ENCODE measurements at regions of chrX and their contacts with region 1.

Region 1: GRCh38 chrX:154013614-154014360 is 5.9 kb downstream of the IRAK1 start:
- DNase-seq: peak in 2 of 3 donors; percentile 51 to 57
- H3K4me3 ChIP-seq: no peak overlapping the region
- H3K4me3 Mint-ChIP-seq: no peak overlapping the region
- H3K27ac ChIP-seq: peak overlapping the region in 1 of 2 donors; percentile 40
- H3K27ac Mint-ChIP-seq: peak overlapping the region; percentile 18 to 85 (median 72)
- H3K4me1 ChIP-seq: peaks cover 45 to 58% of the 10 kb centered on the region in 2 donors
- H3K4me1 Mint-ChIP-seq: peaks cover 30% of the 10 kb centered on the region
- H3K27me3 ChIP-seq: no peaks in the 10 kb centered on the region
- H3K27me3 Mint-ChIP-seq: peaks cover 0 to 50% (median 0%) of the 10 kb centered on the region in 3 donors
- CTCF ChIP-seq: peak; percentile 90

Region 2: GRCh38 chrX:153927922-153928760 is 85.6 kb before region 1 on chrX:
- intact Hi-C with region 1: no loop called
- DNase-seq: peak; percentile 91 to 98 (median 95)
- H3K4me3 ChIP-seq: peak overlapping the region; percentile 44 to 90 (median 89)
- H3K4me3 Mint-ChIP-seq: peak overlapping the region; percentile 83 to 90
- H3K27ac ChIP-seq: peak overlapping the region; percentile 94 to 99
- H3K27ac Mint-ChIP-seq: peak overlapping the region; percentile 93 to 99 (median 98)
- H3K4me1 ChIP-seq: peaks cover 48 to 74% of the 10 kb centered on the region in 2 donors
- H3K4me1 Mint-ChIP-seq: peaks cover 26% of the 10 kb centered on the region
- H3K27me3 ChIP-seq: no peaks in the 10 kb centered on the region
- H3K27me3 Mint-ChIP-seq: peaks cover 0 to 29% (median 2%) of the 10 kb centered on the region in 3 donors
- CTCF ChIP-seq: no peak

Region 3: DNA sequence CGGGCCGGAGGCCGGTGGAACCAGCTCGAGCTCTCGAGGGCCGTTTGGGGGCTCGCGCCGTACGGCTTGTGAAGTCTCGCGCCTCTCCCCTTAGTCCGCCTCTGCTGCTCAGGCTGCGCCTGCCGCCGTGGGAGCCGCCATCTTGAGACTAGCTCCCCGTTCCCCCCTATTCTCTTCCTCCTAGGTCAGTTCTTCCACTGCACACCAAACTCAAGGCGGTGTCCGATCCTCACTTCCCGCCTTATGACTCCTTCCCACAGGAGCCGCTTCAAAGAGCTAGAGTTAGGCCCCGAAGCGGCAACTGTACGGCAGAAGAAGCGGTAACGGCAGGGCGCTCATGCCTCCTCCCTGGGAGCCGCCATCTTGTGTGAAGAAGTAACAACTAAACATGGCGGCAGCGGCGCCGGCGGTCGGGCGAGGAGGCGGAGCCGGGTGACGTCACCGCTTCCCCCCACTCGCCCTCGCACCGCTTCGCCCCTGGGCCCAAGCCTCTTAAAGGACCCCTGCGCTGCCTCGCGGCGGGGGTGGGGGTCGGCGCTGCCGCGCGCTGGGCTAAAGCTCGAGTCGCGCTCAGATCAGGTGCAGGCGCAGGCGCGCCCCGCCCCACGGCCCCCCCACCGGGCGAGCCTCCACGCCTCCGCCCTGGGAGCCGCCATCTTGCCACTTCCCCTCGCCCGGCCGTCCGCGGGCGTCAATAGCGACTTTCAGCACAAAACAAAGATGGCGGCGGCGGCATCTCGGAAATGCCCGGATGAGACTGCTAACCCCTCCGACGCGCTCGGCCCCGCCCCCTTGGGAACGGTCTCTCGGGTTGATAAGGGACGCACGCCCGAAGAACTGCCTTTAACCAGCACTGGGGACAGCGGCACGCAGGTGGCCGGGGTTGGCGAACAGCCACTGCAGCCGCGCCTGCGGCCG is 42.1 kb before region 1 on chrX and contains the start of gene HCFC1:
- intact Hi-C with region 1: loop called (anchors 5 kb)
- DNase-seq: peak; percentile 82 to 93 (median 90)
- H3K4me3 ChIP-seq: peak within 1 kb of the TSS; percentile 90 to 100 (median 99)
- H3K4me3 Mint-ChIP-seq: peak within 1 kb of the TSS; percentile 99 to 100
- H3K27ac ChIP-seq: peak within 1 kb of the TSS; percentile 99 to 100
- H3K27ac Mint-ChIP-seq: peak within 1 kb of the TSS; percentile 100
- H3K4me1 ChIP-seq: peaks cover 55 to 60% of the 10 kb centered on the region in 2 donors
- H3K4me1 Mint-ChIP-seq: peaks cover 50% of the 10 kb centered on the region
- H3K27me3 ChIP-seq: no peaks in the 10 kb centered on the region
- H3K27me3 Mint-ChIP-seq: peaks cover 0 to 46% (median 0%) of the 10 kb centered on the region in 3 donors
- CTCF ChIP-seq: no peak
- polyA plus RNA-seq, gene HCFC1: 1.9 to 21.8 (median 3.8) TPM

Region 4: GRCh38 chrX:154051201-154051810 is 37.5 kb after region 1 on chrX:
- intact Hi-C with region 1: loop called in 1 of 2 experiments (anchors 5 kb)
- DNase-seq: peak; percentile 47 to 57 (median 57)
- H3K4me3 ChIP-seq: no peak overlapping the region
- H3K4me3 Mint-ChIP-seq: no peak overlapping the region
- H3K27ac ChIP-seq: no peak overlapping the region
- H3K27ac Mint-ChIP-seq: peak overlapping the region in 6 of 7 donors; percentile 5 to 90 (median 73)
- H3K4me1 ChIP-seq: peaks cover 0 to 2% of the 10 kb centered on the region in 2 donors
- H3K4me1 Mint-ChIP-seq: peaks cover 11% of the 10 kb centered on the region
- H3K27me3 ChIP-seq: peaks cover 0 to 14% of the 10 kb centered on the region in 2 donors
- H3K27me3 Mint-ChIP-seq: peaks cover 0 to 39% (median 3%) of the 10 kb centered on the region in 3 donors
- CTCF ChIP-seq: peak; percentile 70